ENCODE measurements at regions of chr18 and their contacts with region 1.

Region 1: GRCh38 chr18:7084080-7085075 is 33.2 kb downstream of the LAMA1 start:
- DNase-seq: no peak
- H3K4me3 ChIP-seq: no peak overlapping the region
- H3K27ac ChIP-seq: peak overlapping the region; percentile 29 to 70
- H3K4me1 ChIP-seq: peaks cover 4% of the 10 kb centered on the region
- H3K27me3 ChIP-seq: no peaks in the 10 kb centered on the region
- CTCF ChIP-seq: no peak
- EP300 ChIP-seq: no peak
- POLR2A ChIP-seq: no peak

Region 2: GRCh38 chr18:7038330-7038851 is 46.0 kb before region 1 on chr18:
- intact Hi-C with region 1: loop called in 1 of 4 experiments (anchors 10 kb)
- DNase-seq: peak; percentile 87 to 95 (median 90)
- H3K4me3 ChIP-seq: peak overlapping the region; percentile 1
- H3K27ac ChIP-seq: peak overlapping the region; percentile 50 to 63
- H3K4me1 ChIP-seq: peaks cover 2% of the 10 kb centered on the region
- H3K27me3 ChIP-seq: no peaks in the 10 kb centered on the region
- CTCF ChIP-seq: peak; percentile 40 to 91 (median 82)
- EP300 ChIP-seq: peak; percentile 92
- POLR2A ChIP-seq: no peak

Region 3: DNA sequence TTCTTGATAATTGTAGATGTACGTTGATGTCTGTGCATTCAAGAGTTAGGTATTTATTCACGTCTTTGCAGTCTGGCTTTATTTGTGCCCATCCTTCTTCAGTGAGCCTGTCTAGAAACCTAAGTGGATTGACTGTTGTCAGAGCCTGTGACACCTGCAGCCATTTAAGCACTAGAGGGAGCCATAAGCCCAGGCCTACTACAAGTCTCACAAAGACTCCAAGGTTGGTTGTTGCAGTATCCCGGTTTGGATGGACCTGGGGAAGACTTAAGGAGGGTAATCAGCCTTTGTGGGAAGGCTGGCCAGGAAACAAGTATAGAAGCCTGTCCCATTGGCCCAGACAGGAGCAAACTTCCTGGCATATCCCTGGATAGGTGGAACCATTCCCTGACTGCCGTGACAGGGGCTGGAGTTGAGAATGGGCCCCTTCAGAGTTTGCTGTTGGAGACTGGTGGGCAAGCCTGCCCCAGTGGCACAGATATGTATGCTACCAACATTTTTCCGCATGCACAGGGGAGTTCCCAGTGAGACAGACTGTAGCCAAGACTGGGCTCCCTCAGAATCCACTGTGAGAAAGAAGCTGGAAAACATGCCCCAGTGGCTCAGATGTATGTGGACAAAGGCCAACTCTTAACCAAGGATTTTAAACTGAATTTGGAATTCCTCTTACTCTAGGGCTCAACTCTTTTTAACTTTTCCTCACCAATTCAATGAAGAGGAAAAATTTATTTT is 137.2 kb after region 1 on chr18:
- intact Hi-C with region 1: no loop called
- DNase-seq: no peak
- H3K4me3 ChIP-seq: no peak overlapping the region
- H3K27ac ChIP-seq: no peak overlapping the region
- H3K4me1 ChIP-seq: no peaks in the 10 kb centered on the region
- H3K27me3 ChIP-seq: no peaks in the 10 kb centered on the region
- CTCF ChIP-seq: no peak
- EP300 ChIP-seq: no peak
- POLR2A ChIP-seq: no peak

Measured in ovary (tissue), 10 donors.